Activated CD4-positive, alpha-beta memory T cell treated with anti-CD3 and anti-CD28 coated beads for 36 hours (primary cell): ENCODE measurements at regions of chr18 and their contacts with region 1.

Region 1: DNA sequence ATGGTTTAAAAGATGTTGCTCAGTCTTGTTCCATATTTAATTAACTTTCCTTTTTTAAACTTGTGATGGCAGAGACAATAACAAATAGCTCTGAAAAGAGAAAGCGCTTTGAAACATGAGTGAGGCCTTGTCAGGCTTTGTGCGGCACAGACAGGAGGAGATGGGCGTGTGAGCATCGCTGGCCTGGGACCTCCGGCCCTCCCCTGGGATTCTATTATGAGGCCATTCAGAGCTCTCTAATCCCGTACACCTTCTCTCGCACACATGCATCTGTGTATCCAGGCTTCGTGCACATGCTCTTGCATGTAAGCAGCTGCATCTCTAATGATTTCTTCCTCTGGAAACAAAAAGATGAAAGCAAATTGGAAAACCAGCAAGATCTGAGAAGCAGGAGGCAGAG is 313.7 kb downstream of the ZNF521 start:
- DNase-seq: no peak
- H3K4me3 Mint-ChIP-seq: no peak overlapping the region
- H3K27ac Mint-ChIP-seq: no peak overlapping the region
- H3K4me1 Mint-ChIP-seq: no peaks in the 10 kb centered on the region
- H3K27me3 Mint-ChIP-seq: no peaks in the 10 kb centered on the region

Region 2: GRCh38 chr18:24974431-24974830 is 63.8 kb before region 1 on chr18:
- CTCF ChIA-PET with region 1: no interaction called
- POLR2A ChIA-PET with region 1: no interaction called
- intact Hi-C with region 1: loop called (anchors 10 kb)
- DNase-seq: no peak
- H3K4me3 Mint-ChIP-seq: no peak overlapping the region
- H3K27ac Mint-ChIP-seq: no peak overlapping the region
- H3K4me1 Mint-ChIP-seq: no peaks in the 10 kb centered on the region
- H3K27me3 Mint-ChIP-seq: peaks cover 4% of the 10 kb centered on the region

Region 3: DNA sequence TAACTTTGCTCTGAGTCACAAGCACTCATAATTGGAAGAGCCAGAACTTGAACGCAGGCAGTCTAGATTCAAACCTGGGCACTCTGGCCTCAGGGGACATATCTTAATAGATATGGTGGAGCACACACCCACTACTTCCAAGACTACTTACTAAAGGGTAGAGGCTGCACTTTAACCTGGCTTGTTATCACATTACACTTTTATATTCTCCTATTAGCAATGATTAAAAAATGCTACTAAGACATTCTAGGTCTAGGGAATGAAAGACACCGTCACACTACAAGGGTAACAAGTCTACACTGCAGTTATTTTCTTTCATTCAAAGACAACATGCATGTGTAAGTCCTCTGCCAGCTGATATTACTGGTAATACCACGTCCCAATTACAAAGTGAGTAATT is 54.9 kb after region 1 on chr18:
- CTCF ChIA-PET with region 1: no interaction called
- POLR2A ChIA-PET with region 1: no interaction called
- intact Hi-C with region 1: no loop called
- DNase-seq: no peak
- H3K4me3 Mint-ChIP-seq: no peak overlapping the region
- H3K27ac Mint-ChIP-seq: no peak overlapping the region
- H3K4me1 Mint-ChIP-seq: no peaks in the 10 kb centered on the region
- H3K27me3 Mint-ChIP-seq: no peaks in the 10 kb centered on the region